IMR-90 (cell line): ENCODE measurements at regions of chr3 and their contacts with region 1.

Region 1: DNA sequence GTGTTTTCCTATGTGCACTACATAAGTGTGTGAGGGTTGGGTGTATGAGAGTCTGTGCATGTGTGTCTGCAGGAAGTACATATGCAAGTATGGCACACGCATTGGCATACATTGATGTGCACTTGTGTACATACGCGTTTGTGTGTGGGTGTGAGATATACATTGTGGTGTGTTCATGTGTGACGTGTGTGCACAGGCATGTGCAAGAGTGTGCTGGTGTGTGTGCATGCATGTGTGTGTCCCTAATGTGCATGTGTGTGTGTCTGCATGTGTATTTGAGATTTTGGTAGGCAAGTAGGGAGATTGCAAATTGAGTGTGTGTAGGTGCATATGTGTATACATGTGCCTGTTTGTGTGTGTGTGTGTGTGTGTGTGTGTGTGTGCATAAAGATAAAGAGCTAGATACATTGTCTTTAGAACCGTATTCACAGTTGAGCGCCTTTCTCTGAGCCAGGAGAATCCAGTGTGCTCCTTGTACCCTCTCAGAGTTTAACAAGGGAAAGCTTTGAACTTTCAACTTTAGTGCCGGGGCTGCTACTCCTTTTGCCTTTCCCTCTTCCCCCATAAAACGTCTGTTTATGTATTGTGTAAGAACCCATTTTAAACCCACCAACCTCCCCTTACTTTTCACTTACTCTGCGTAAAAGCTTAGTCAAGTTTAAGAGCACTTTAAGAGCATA is 152.4 kb upstream of the CHL1 start:
- DNase-seq: no peak
- ATAC-seq: no peak
- H3K4me3 ChIP-seq: no peak overlapping the region
- H3K27ac ChIP-seq: no peak overlapping the region
- H3K4me1 ChIP-seq: no peaks in the 10 kb centered on the region
- H3K27me3 ChIP-seq: no peaks in the 10 kb centered on the region
- CTCF ChIP-seq: no peak
- POLR2A ChIP-seq: no peak
- RAD21 ChIP-seq: no peak

Region 2: GRCh38 chr3:140748-141330 is 96.7 kb after region 1 on chr3:
- CTCF ChIA-PET with region 1: no interaction called
- POLR2A ChIA-PET with region 1: no interaction called
- dilution Hi-C with region 1: no loop called
- in situ Hi-C with region 1: no loop called
- intact Hi-C with region 1: no loop called
- DNase-seq: no peak
- ATAC-seq: no peak
- H3K4me3 ChIP-seq: no peak overlapping the region
- H3K27ac ChIP-seq: no peak overlapping the region
- H3K4me1 ChIP-seq: no peaks in the 10 kb centered on the region
- H3K27me3 ChIP-seq: no peaks in the 10 kb centered on the region
- CTCF ChIP-seq: no peak
- POLR2A ChIP-seq: no peak
- RAD21 ChIP-seq: no peak

Region 3: DNA sequence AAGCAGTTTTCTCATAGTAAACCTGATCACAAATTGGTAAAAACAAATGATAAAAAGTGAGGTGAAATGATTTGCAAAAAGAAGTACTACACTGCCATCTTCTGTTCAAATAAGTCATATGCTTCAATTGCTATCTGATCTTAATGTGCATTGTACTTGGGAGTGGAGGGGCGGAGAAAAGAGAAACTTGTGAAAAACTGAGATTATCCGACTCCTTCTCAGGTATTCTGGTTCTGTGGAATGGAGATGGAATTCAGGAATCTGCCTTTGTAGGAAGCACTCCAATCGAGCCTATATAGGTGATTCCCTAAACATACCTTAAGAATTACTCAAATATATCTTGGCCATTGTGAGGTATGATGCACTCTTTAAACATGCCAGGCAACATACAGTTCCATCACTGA is 333.0 kb after region 1 on chr3:
- CTCF ChIA-PET with region 1: no interaction called
- POLR2A ChIA-PET with region 1: no interaction called
- dilution Hi-C with region 1: no loop called
- in situ Hi-C with region 1: no loop called
- intact Hi-C with region 1: loop called (anchors 1 kb)
- DNase-seq: peak; percentile 63
- ATAC-seq: peak; percentile 89
- H3K4me3 ChIP-seq: peak overlapping the region; percentile 38; the same call in 1 of the 2 replicates
- H3K27ac ChIP-seq: no peak overlapping the region
- H3K4me1 ChIP-seq: no peaks in the 10 kb centered on the region
- H3K27me3 ChIP-seq: no peaks in the 10 kb centered on the region
- CTCF ChIP-seq: peak; percentile 57
- POLR2A ChIP-seq: no peak
- RAD21 ChIP-seq: peak; percentile 68

Region 4: DNA sequence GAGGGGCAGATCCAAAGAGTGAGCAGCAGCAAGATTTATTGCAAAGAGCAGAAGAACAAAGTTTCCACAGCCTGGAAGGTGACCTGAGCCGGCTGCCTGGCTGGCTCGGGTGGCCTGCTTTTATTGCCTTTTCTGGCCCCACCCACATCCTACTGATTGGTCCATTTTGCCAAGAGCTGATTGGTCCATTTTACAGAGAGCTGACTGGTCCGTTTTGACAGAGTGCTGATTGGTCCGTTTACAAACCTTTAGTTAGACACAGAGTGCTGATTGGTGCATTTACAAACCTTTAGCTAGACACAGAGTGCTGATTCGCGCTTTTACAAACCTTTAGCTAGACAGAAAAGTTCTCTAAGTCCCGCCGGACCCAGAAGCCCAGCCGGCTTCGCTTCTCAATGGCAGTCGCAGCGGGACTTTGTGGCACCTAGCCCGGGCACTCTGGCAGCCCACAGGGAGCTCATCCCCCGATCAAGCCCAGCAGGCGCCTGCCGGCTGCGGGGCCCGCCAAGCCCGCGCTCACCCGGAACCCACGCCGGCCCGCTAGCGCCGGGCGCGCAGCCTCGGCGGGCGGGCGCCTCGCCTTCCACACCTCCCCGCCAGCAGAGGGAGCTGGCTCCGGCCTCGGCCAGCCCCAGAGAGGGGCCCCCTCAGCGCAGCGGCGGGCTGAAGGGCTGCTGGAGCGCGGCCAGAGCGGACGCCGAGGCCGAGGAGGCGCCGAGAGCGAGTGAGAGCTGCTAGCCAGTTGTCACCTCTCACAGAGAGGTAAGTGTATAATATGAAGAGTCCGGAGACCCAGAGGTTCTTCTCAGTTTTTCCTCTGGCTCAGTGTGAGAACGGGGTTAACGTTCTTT is 491.7 kb after region 1 on chr3:
- CTCF ChIA-PET with region 1: no interaction called
- POLR2A ChIA-PET with region 1: no interaction called
- dilution Hi-C with region 1: no loop called
- in situ Hi-C with region 1: no loop called
- intact Hi-C with region 1: no loop called
- DNase-seq: peak; percentile 11
- ATAC-seq: peak; percentile 71
- H3K4me3 ChIP-seq: peak overlapping the region; percentile 62
- H3K27ac ChIP-seq: peak overlapping the region; percentile 24; the same call in 1 of the 2 replicates
- H3K4me1 ChIP-seq: no peaks in the 10 kb centered on the region
- H3K27me3 ChIP-seq: no peaks in the 10 kb centered on the region
- CTCF ChIP-seq: peak; percentile 34
- POLR2A ChIP-seq: no peak
- RAD21 ChIP-seq: no peak